BJ (cell line): ENCODE measurements at regions of chr9 and their contacts with region 1.

Region 1: DNA sequence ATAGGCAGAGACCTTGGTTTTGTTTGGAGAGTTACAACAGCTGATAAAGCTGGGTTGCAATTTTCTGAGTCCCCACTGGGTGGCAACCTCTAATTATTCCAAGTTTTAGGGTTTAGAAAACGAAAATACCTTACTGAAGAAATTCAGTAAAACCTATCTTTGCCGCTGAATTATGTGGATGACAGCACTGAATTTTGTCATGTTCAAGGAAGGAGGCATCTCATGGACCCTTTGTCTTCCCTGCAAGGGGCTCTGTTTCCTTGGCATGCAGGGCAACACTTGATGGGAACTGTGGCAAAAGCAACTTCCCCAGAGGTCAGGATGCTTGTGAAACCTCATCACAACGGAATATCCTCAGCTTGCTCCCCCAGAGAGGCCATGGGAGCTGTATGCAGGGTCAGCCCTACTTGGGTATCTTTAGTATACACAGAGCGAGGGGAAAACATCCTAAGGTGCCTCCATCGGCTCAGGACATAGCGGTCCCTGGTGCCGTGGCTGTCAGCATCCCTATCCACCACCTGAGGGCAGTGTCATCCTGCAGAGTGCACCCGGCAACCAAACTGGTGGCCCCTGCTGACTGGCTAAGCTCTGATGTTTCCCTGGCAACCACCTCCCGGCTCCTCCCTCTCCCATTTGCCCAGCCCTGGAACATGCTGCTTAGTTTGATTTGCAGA is 123.1 kb downstream of the RXRA start:
- DNase-seq: peak; percentile 70
- H3K4me3 ChIP-seq: no peak overlapping the region
- H3K27me3 ChIP-seq: no peaks in the 10 kb centered on the region
- CTCF ChIP-seq: peak; percentile 92

Region 2: DNA sequence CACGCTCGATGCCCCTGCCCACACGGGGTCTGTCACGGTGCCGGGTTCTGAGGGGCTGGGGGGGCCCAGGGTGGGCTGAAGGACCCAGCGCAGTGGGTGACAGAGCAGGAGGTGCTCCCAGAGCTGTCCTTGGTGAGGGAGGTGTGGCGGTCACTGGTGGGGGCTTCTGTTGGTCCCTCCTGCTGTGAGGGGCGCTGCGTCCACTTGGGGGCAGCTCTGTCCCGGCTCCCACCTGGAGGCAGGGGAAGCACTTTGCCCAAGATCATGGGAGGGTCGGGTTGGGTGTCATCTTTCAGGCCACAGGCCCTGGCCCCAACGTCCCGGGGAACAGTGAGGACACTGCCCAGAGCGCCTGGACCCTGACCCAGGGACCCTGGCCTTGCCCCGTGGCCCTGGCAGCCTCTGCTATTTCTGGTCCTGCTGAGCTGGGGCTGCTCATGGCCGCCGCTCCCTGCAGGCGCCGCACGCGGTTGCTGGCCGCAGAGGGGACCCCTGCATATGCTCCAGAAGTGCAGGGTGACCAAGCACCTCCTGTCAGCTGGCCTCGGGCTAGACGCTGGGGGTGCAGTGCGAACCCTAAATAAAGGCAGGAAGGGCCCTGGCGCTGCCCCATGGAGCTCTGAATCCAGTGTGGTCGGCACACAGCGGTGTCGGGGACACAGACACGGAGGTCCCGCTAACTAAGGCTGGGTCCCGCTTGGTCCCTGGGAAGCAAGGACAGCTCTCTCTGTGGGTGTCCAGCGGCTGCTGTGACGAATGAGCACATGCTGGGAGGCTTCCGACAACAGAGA is 273.4 kb before region 1 on chr9:
- CTCF ChIA-PET with region 1: interaction called, 56 read pairs
- POLR2A ChIA-PET with region 1: no interaction called
- DNase-seq: no peak
- H3K4me3 ChIP-seq: no peak overlapping the region
- H3K27me3 ChIP-seq: peaks cover 13% of the 10 kb centered on the region
- CTCF ChIP-seq: no peak

Region 3: GRCh38 chr9:134469041-134469875 is 19.9 kb after region 1 on chr9:
- CTCF ChIA-PET with region 1: no interaction called
- POLR2A ChIA-PET with region 1: no interaction called
- DNase-seq: no peak
- H3K4me3 ChIP-seq: no peak overlapping the region
- H3K27me3 ChIP-seq: no peaks in the 10 kb centered on the region
- CTCF ChIP-seq: no peak

Region 4: DNA sequence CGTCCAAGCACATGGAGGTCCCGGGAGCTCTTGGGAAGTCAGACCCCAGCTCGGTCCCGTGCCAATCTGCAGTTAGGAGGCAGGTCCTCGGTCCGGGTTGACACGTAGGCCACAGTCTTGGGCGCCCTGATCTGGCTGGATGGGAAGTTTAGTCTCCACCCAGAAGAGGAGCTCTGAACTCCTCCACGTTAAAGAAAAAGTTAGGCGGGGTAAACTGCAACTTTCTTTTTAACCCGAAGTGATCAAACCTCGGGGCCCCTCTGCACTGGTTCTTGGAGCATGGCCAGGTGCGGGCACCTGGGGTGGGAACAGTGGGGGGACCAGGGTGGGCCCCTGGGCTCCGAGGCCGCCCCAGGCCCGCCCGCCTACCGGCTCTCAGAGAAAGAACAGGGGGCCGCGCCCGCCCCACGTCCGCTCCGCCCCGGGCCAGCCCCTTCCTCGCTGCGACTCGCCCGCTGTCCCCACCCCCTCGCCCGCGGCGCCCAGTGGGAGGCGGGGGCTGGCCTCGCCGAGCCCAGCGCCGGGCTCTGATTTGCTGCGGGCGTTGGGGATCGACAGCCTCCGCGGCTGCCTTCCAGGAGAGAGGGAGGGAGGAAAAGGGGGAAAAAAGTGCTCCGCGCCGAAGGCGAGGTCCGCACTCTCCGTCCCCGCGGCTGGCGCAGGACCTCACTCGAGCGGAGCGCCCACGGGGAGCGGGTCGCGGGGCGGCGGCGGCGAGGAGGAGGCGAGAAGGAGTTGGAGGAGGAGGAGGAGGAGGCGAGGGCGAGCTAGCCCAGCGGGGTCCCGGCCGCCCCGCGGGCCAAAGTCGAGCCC is 192.0 kb after region 1 on chr9 and contains the start of gene COL5A1:
- CTCF ChIA-PET with region 1: interaction called, 29 read pairs
- POLR2A ChIA-PET with region 1: interaction called, 3 read pairs
- DNase-seq: peak; percentile 64
- H3K4me3 ChIP-seq: peak within 1 kb of the TSS; percentile 76
- H3K27me3 ChIP-seq: no peaks in the 10 kb centered on the region
- CTCF ChIP-seq: peak; percentile 29; the same call in 1 of the 2 replicates
- polyA plus RNA-seq, gene COL5A1: 170 and 251 TPM in 2 replicates

Region 5: GRCh38 chr9:134660407-134660806 is 211.0 kb after region 1 on chr9:
- CTCF ChIA-PET with region 1: interaction called, 16 read pairs
- POLR2A ChIA-PET with region 1: no interaction called
- DNase-seq: no peak
- H3K4me3 ChIP-seq: no peak overlapping the region
- H3K27me3 ChIP-seq: no peaks in the 10 kb centered on the region
- CTCF ChIP-seq: peak; percentile 80

Region 6: DNA sequence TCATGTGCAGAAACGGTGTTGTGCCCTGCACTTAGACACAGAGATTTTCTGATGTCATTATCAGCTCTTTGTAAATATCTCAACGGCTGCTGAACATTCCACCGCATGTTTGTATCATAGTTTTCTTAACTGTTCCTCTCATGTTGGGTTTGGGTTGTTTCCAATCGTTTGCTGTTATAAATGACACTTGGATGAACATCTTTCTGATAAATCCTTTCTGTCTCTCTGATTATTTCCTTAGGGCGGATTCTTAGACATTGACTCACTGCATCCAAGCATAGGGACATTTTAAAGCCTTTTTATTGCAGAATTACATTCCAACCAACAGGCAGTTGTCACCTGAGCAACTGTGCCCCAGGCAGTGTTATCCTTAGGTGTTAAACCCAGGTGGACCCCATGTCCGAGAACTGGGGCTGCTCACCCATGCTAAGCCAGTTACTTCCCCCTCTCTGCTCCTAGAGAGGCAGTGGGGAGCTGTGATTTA is 220.7 kb after region 1 on chr9:
- CTCF ChIA-PET with region 1: interaction called, 18 read pairs
- POLR2A ChIA-PET with region 1: interaction called, 14 read pairs
- DNase-seq: peak; percentile 87
- H3K4me3 ChIP-seq: no peak overlapping the region
- H3K27me3 ChIP-seq: no peaks in the 10 kb centered on the region
- CTCF ChIP-seq: no peak

Region 7: GRCh38 chr9:134689321-134690181 is 240.2 kb after region 1 on chr9:
- CTCF ChIA-PET with region 1: interaction called, 20 read pairs
- POLR2A ChIA-PET with region 1: no interaction called
- DNase-seq: no peak
- H3K4me3 ChIP-seq: no peak overlapping the region
- H3K27me3 ChIP-seq: no peaks in the 10 kb centered on the region
- CTCF ChIP-seq: peak; percentile 91

Region 8: GRCh38 chr9:134738869-134739659 is 289.7 kb after region 1 on chr9:
- CTCF ChIA-PET with region 1: interaction called, 27 read pairs
- POLR2A ChIA-PET with region 1: no interaction called
- DNase-seq: no peak
- H3K4me3 ChIP-seq: no peak overlapping the region
- H3K27me3 ChIP-seq: no peaks in the 10 kb centered on the region
- CTCF ChIP-seq: peak; percentile 84